HepG2 (cell line): ENCODE measurements at regions of chr1 and their contacts with region 1.

Region 1: GRCh38 chr1:6235296-6235677 is 477 bp downstream of the ICMT start:
- DNase-seq: no peak
- ATAC-seq: no peak
- H3K4me3 ChIP-seq: peak overlapping the region; percentile 79 to 82 (median 81)
- H3K27ac ChIP-seq: peak overlapping the region; percentile 56
- H3K4me1 ChIP-seq: peaks cover 50% of the 10 kb centered on the region
- H3K27me3 ChIP-seq: no peaks in the 10 kb centered on the region
- CTCF ChIP-seq: no peak
- EP300 ChIP-seq: no peak
- POLR2A ChIP-seq: no peak
- RAD21 ChIP-seq: no peak

Region 2: DNA sequence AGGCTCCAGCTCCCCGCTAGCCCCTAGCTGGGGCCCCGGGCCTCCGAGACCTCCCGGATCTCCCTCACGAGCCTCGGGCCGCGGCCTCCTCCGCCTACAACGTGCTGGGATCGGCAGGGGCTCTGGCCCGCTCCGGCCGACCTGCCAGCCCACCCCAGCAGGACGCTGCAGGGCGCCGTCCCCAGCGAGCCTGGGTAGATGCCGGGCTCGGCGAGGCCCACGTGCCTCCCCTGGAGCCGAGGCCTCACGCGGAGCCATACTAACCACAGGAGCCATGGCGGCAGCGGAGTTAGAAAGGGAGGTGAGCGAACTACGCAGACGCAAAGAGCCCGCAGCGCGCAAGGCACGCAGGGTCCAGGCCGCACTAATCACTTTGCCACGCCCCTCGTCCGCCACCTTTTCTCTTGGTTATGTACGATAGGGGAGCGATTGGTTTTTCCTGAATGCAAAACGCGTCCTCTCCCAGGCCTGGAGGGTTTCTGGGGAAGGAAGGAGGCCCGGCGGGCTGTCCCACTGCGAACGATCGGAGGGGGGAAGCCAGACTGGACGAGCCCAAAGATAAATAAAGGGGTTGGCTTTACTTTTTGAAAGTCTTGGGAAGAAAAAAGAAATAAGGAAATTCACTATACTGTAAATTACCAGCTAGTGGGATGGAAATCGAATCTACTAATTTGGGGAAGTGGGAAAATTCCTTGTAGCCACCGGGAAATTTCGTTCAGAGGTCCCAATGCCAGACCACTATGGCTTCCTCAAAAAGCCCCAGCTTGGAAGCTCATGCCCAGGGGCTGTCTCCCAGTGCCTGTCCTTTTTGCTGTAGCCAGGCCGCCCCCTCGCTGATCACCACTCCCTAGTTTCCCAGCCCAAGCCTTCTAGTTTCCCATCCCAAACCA is 35.7 kb before region 1 on chr1 and contains the start of gene RPL22:
- CTCF ChIA-PET with region 1: no interaction called
- POLR2A ChIA-PET with region 1: interaction called, 17 read pairs
- in situ Hi-C with region 1: no loop called
- intact Hi-C with region 1: loop called (anchors 2 kb)
- DNase-seq: peak; percentile 98
- ATAC-seq: peak; percentile 98
- H3K4me3 ChIP-seq: peak within 1 kb of the TSS; percentile 93 to 97 (median 94)
- H3K27ac ChIP-seq: peak within 1 kb of the TSS; percentile 82
- H3K4me1 ChIP-seq: peaks cover 44% of the 10 kb centered on the region
- H3K27me3 ChIP-seq: no peaks in the 10 kb centered on the region
- CTCF ChIP-seq: 0 out of 2 replicates have a peak, but pooled peaks have one; percentile 11
- EP300 ChIP-seq: peak in 1 of 2 experiments; percentile 9; a peak in 1 of 4 replicates
- POLR2A ChIP-seq: peak; percentile 93
- RAD21 ChIP-seq: no peak
- total RNA-seq, gene RPL22: 545 and 787 TPM in 2 replicates

Region 3: DNA sequence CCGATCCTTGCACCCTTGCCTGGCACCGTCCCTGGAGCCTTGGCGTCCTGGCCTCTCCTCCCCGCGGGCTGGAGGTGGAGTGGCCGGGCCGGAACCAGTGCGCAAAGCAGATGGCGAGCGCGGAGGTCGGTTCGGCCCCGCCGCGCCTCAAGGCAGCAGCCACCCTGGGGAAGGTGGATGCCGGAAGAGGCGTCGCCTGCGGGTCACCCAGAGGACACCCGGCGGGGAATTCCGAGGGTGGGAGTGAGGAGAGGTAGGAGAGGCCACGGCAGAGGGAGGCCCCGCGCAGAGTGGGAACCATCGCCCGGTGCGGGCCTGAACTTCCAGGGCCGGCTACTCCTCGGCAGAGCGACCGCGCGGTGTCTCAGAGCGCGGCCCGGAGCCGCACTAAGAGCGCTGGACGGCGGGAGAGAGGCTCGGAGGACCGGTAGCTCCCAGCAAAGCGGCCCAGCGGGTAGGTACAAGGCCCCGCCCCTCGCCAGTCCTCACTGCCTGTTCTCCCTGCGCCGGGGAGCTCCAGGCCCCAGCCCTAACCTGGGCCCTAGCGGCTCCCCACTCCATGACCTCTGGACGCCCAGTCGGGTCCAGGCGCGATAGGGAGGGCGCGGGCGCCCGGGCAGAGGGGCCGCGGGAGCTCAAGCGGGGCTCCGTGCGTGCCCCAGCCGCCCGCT is 29.3 kb before region 1 on chr1 and contains the start of gene RNF207:
- CTCF ChIA-PET with region 1: no interaction called
- POLR2A ChIA-PET with region 1: interaction called, 17 read pairs
- in situ Hi-C with region 1: no loop called
- intact Hi-C with region 1: loop called (anchors 2 kb)
- DNase-seq: peak; percentile 77
- ATAC-seq: peak; percentile 84
- H3K4me3 ChIP-seq: peak within 1 kb of the TSS; percentile 79 to 90 (median 84)
- H3K27ac ChIP-seq: peak within 1 kb of the TSS; percentile 82
- H3K4me1 ChIP-seq: peaks cover 17% of the 10 kb centered on the region
- H3K27me3 ChIP-seq: no peaks in the 10 kb centered on the region
- CTCF ChIP-seq: peak; percentile 14; the same call in 1 of the 2 replicates
- EP300 ChIP-seq: no peak
- POLR2A ChIP-seq: peak; percentile 71 to 81
- RAD21 ChIP-seq: no peak
- total RNA-seq, gene RNF207: 1.7 and 9.8 TPM in 2 replicates

Region 4: GRCh38 chr1:6367381-6368012 is 132.2 kb after region 1 on chr1:
- CTCF ChIA-PET with region 1: no interaction called
- POLR2A ChIA-PET with region 1: no interaction called
- in situ Hi-C with region 1: no loop called
- intact Hi-C with region 1: no loop called
- DNase-seq: no peak
- ATAC-seq: no peak; the same call in 2 of the 3 replicates
- H3K4me3 ChIP-seq: no peak overlapping the region
- H3K27ac ChIP-seq: no peak overlapping the region
- H3K4me1 ChIP-seq: peaks cover 25% of the 10 kb centered on the region
- H3K27me3 ChIP-seq: no peaks in the 10 kb centered on the region
- CTCF ChIP-seq: no peak
- EP300 ChIP-seq: no peak
- POLR2A ChIP-seq: no peak
- RAD21 ChIP-seq: no peak